ENCODE measurements at regions of chr17 and their contacts with region 1.

Region 1: GRCh38 chr17:10748531-10749163 is 18.8 kb upstream of the TMEM220 start:
- DNase-seq: no peak
- ATAC-seq: no peak
- H3K4me3 ChIP-seq: no peak overlapping the region
- H3K27ac ChIP-seq: no peak overlapping the region
- H3K4me1 ChIP-seq: no peaks in the 10 kb centered on the region
- H3K27me3 ChIP-seq: no peaks in the 10 kb centered on the region
- CTCF ChIP-seq: no peak
- EP300 ChIP-seq: no peak
- POLR2A ChIP-seq: no peak
- RAD21 ChIP-seq: no peak

Region 2: DNA sequence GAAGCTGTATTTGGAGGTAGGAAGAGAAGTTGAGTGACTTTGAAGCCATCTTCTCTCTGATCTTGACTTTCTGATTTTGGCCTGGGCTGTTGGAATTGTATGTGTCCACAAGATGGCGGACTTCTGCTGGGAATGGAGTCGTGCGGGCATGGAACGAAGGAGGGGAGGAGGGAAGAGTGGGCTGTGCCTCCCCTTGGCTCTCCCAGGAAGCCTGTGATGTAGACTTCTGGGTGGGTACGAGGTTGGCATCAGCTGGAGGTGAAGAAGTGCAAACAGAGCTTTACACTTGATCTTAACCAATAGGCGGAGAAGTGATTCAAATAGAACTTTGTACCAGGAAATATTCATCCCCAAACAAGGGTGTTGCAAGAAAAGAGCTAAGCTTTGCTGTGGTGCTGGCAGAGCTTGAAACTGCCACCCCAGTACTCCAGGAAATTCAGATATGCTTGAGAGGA is 11.5 kb before region 1 on chr17:
- CTCF ChIA-PET with region 1: interaction called, 16 read pairs
- POLR2A ChIA-PET with region 1: no interaction called
- RAD21 ChIA-PET with region 1: no interaction called
- SMC1A ChIA-PET with region 1: interaction called, 3 read pairs
- in situ Hi-C with region 1: no loop called
- intact Hi-C with region 1: no loop called
- DNase-seq: no peak
- ATAC-seq: peak; percentile 67
- H3K4me3 ChIP-seq: no peak overlapping the region
- H3K27ac ChIP-seq: no peak overlapping the region
- H3K4me1 ChIP-seq: no peaks in the 10 kb centered on the region
- H3K27me3 ChIP-seq: no peaks in the 10 kb centered on the region; a peak in 1 of 4 replicates
- CTCF ChIP-seq: peak; percentile 64 to 66 (median 66)
- EP300 ChIP-seq: no peak
- POLR2A ChIP-seq: no peak
- RAD21 ChIP-seq: peak; percentile 70